Activated CD4-positive, alpha-beta T cell treated with anti-CD3 and anti-CD28 coated beads, Interleukin-2, amount 10 ng/mL, durations not matched to agents 7 days and 5 days (primary cell): ENCODE measurements at regions of chr12 and their contacts with region 1.

Region 1: DNA sequence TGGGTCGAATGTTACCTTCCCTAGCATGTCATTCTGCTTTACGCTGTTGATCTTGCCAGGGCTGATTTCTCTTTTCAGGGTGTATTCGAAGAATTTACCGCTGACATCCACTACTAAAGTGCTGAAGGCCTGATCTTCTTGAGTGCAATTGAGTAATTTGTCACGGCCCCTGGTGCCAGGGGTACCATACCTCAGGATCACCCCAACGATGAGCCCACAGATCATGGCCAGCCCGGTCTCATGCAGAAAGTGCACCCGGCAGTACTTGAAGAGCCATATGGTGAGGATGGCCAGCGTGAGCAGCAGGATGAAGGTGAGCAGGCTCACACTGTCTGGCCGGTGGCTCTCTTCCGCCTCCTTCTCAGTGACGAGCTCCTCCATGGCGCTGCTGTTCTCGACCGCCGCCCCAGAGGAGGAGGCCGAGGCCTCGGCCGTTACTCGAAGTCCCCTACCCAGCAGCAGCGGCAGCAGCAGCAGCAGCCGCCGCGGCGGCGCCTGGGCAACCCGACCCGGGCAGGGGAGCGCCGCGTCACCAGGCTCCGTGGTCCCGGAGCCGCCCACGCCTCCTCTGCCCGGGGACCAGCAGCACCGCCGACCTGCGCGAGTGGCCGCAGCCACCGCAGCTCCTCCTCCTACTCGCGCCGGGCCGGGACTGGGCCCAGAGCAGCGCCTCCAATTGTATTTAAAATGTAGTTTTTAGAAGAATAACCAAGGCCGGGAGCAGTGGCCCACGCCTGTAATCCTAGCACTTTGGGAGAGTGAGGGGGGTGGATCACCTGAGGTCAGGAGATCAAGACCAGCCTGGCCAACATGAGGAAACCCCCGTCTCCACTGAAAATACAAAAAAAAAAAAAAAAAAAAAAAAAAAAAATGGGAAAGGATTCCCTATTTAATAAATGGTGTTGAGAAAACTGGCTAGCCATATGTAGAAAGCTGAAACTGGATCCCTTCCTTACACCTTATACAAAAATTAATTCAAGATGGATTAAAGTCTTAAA is 58.5 kb upstream of the TMPO start:
- DNase-seq: no peak
- H3K4me3 Mint-ChIP-seq: no peak overlapping the region
- H3K27ac Mint-ChIP-seq: no peak overlapping the region
- H3K4me1 Mint-ChIP-seq: peaks cover 3% of the 10 kb centered on the region
- H3K27me3 Mint-ChIP-seq: peaks cover 30% of the 10 kb centered on the region

Region 2: DNA sequence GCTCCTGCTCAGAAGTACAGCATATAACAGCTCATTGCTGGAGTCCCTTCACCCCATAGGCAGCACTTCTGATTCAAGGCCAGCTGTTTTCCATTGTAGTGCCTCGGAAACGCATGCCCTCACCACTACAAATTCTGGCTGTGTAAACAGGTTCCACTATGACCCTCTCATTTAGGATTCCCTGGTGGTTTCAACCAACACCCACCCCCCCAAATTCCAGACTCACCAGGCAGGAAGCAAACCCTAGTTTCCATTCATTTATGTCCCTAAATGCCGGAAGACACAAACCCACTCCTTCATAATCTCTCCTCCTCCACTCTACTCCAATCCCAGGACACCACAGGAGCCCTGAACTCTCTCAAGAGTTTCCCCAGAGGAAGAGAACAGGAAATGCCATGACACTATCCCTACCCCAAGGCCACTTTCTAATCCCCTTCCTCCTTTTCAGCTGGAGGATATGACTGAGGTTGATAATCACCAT is 17.4 kb before region 1 on chr12:
- CTCF ChIA-PET with region 1: interaction called, 10 read pairs
- POLR2A ChIA-PET with region 1: no interaction called
- DNase-seq: no peak
- H3K4me3 Mint-ChIP-seq: no peak overlapping the region
- H3K27ac Mint-ChIP-seq: no peak overlapping the region
- H3K4me1 Mint-ChIP-seq: no peaks in the 10 kb centered on the region
- H3K27me3 Mint-ChIP-seq: peaks cover 51% of the 10 kb centered on the region